ENCODE measurements at regions of chr11 and their contacts with region 1.

Region 1: DNA sequence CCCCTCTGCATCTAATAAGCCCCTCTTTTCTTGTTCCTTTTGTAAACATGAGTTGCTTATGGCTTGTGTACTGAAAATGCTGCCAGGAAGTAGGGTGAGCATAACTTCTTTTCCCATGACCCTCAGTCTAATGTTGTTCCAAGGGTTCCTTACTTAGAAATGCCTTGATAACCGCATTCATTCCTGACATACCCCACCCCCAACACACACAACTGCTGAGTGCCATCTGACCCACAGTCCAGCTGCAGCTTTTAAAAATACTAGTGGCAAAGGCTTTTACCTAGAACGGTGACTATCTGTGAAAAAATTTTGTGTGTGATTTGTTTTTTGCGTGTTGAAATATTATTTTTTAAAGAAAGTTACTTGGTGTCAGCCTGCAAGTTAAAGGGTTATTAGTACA is 52.6 kb downstream of the ARHGAP42 start:
- DNase-seq: peak in 1 of 2 experiments; percentile 72
- ATAC-seq: peak; percentile 63 to 84; a peak in 3 of 6 replicates
- H3K4me3 ChIP-seq: no peak overlapping the region
- H3K27ac ChIP-seq: peak overlapping the region; percentile 38 to 41; a peak in 5 of 6 replicates
- H3K4me1 ChIP-seq: peaks cover 60% of the 10 kb centered on the region
- CTCF ChIP-seq: no peak
- EP300 ChIP-seq: no peak
- POLR2A ChIP-seq: no peak
- RAD21 ChIP-seq: no peak

Region 2: GRCh38 chr11:100687630-100688395 is 51.9 kb before region 1 on chr11:
- CTCF ChIA-PET with region 1: interaction called, 11 read pairs
- POLR2A ChIA-PET with region 1: interaction called, 4 read pairs
- DNase-seq: peak; percentile 60 to 86
- ATAC-seq: peak; percentile 82 to 86
- H3K4me3 ChIP-seq: peak overlapping the region; percentile 77
- H3K27ac ChIP-seq: peak overlapping the region; percentile 84 to 93
- H3K4me1 ChIP-seq: peaks cover 59% of the 10 kb centered on the region
- CTCF ChIP-seq: peak; percentile 48
- EP300 ChIP-seq: no peak
- POLR2A ChIP-seq: no peak
- RAD21 ChIP-seq: peak; percentile 15 to 38; a peak in 3 of 5 replicates

Region 3: GRCh38 chr11:100776212-100776896 is 36.7 kb after region 1 on chr11:
- CTCF ChIA-PET with region 1: no interaction called
- POLR2A ChIA-PET with region 1: interaction called, 10 read pairs
- DNase-seq: peak; percentile 69 to 96
- ATAC-seq: peak; percentile 90 to 92
- H3K4me3 ChIP-seq: peak overlapping the region; percentile 23
- H3K27ac ChIP-seq: peak overlapping the region; percentile 76 to 90
- H3K4me1 ChIP-seq: peaks cover 45% of the 10 kb centered on the region
- CTCF ChIP-seq: no peak
- EP300 ChIP-seq: peak; percentile 51 to 70; a peak in 3 of 5 replicates
- POLR2A ChIP-seq: no peak
- RAD21 ChIP-seq: peak in 1 of 2 experiments; percentile 16; a peak in 1 of 5 replicates

Region 4: DNA sequence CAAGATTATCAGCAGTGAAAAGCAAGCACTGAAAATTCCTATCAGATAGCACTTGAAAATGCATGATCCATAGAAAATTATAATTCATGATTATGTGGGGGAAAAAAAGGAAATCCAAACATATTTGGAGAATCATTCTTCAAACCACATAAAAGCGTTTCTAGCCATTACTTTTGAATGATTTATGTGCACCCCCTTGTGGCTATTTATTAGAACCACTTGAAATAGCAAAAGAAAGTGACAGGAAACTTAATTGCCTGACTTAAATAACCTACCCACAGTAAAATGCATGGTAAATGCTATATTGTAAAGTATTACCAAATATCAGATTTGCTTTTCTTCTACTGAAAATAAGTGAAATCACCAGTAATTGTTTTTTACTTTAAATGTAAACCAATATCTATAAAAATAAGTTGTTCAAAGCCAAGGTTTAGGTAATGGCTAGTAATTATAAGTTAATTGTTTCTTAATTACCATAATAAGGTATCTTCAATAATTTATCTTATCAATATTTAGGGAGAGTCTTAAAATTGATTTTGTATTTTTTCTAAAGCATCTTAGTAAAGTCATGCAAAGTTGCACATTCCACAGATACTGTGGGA is 115.9 kb after region 1 on chr11:
- CTCF ChIA-PET with region 1: no interaction called
- POLR2A ChIA-PET with region 1: no interaction called
- DNase-seq: peak; percentile 7 to 57
- ATAC-seq: peak; percentile 34 to 44; a peak in 1 of 6 replicates
- H3K4me3 ChIP-seq: no peak overlapping the region
- H3K27ac ChIP-seq: no peak overlapping the region
- H3K4me1 ChIP-seq: peaks cover 26% of the 10 kb centered on the region; the same call in 2 of the 3 replicates
- CTCF ChIP-seq: peak; percentile 67
- EP300 ChIP-seq: no peak
- POLR2A ChIP-seq: no peak
- RAD21 ChIP-seq: peak; percentile 77 to 83